PC-3 (cell line): ENCODE measurements at regions of chr3 and their contacts with region 1.

Region 1: GRCh38 chr3:46943237-46944187 is 33.0 kb downstream of the CCDC12 start:
- DNase-seq: peak; percentile 83
- ATAC-seq: peak; percentile 75
- H3K4me3 ChIP-seq: no peak overlapping the region
- H3K27ac ChIP-seq: peak overlapping the region; percentile 42
- H3K4me1 ChIP-seq: peaks cover 48% of the 10 kb centered on the region
- H3K27me3 ChIP-seq: no peaks in the 10 kb centered on the region
- CTCF ChIP-seq: no peak

Region 2: GRCh38 chr3:46909535-46910442 is 33.7 kb before region 1 on chr3:
- CTCF ChIA-PET with region 1: no interaction called
- POLR2A ChIA-PET with region 1: no interaction called
- intact Hi-C with region 1: no loop called
- DNase-seq: peak; percentile 87
- ATAC-seq: peak; percentile 83
- H3K4me3 ChIP-seq: no peak overlapping the region
- H3K27ac ChIP-seq: no peak overlapping the region
- H3K4me1 ChIP-seq: peaks cover 5% of the 10 kb centered on the region; the same call in 1 of the 2 replicates
- H3K27me3 ChIP-seq: no peaks in the 10 kb centered on the region
- CTCF ChIP-seq: peak; percentile 92

Region 3: DNA sequence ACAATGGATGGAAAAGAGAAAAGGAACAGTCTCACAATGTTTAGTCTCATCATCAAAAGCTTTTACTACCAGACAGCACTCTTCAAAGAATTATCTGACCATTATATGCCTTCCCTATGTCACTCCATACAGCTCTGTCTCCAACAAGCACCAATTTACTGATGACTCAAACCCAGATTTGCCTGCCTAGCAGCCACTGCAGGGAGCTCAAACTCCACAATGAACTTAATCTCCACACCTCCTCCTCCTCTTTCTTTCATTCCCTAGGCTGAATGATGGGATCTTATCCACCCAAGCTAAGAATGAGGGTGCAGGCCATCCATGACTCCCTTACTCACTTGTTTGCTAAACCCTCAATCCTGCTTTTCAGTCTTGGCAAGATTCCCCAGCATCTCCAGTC is 81.4 kb after region 1 on chr3:
- CTCF ChIA-PET with region 1: no interaction called
- POLR2A ChIA-PET with region 1: no interaction called
- intact Hi-C with region 1: no loop called
- DNase-seq: peak; percentile 21
- ATAC-seq: peak; percentile 64
- H3K4me3 ChIP-seq: no peak overlapping the region
- H3K27ac ChIP-seq: no peak overlapping the region
- H3K4me1 ChIP-seq: no peaks in the 10 kb centered on the region
- H3K27me3 ChIP-seq: no peaks in the 10 kb centered on the region
- CTCF ChIP-seq: no peak

Region 4: GRCh38 chr3:47047673-47048072 is 104.2 kb after region 1 on chr3:
- CTCF ChIA-PET with region 1: no interaction called
- POLR2A ChIA-PET with region 1: interaction called, 15 read pairs
- intact Hi-C with region 1: no loop called
- DNase-seq: no peak
- ATAC-seq: no peak
- H3K4me3 ChIP-seq: no peak overlapping the region
- H3K27ac ChIP-seq: no peak overlapping the region
- H3K4me1 ChIP-seq: no peaks in the 10 kb centered on the region
- H3K27me3 ChIP-seq: no peaks in the 10 kb centered on the region
- CTCF ChIP-seq: no peak